ENCODE measurements at regions of chr18 and their contacts with region 1.

Region 1: GRCh38 chr18:32343634-32344033 is 127.0 kb downstream of the GAREM1 start:
- DNase-seq: no peak

Region 2: DNA sequence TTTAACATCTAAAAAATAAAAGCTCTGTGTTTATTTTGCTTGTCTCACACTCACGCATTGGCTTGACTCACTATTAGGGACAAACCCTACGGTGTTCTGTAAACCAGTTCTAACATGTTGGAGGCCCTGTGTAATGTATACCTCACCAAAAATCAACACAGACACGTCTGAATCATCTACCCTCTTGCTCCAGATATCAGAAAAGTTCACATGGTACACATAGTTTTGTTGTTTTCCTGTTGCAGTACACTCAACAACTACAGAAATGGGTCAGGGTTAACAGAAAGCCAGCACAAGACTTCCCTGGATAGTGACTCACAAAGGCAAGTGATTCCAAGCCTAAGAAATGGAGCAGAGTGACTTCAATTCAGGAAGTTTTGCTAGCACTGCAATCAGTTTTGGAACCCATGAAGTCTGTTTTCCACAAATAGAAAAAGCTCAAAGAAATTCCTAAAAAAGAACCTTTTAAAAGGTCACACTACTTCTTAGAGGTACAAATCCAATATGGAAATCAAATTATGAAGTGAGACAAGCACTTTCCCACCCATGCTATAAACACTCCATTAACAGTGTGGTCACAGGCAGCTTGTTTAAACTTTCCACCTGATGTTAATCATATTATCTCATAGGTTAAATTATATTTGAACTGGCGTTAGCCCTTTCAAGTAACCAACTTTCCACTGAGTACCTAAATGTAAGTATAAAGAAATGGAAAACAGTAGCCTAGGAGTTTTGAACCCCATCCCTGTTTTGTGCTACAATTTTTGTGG is 39.6 kb after region 1 on chr18:
- intact Hi-C with region 1: loop called (anchors 5 kb)
- DNase-seq: no peak

Region 3: GRCh38 chr18:32420084-32420750 is 76.6 kb after region 1 on chr18:
- intact Hi-C with region 1: no loop called
- DNase-seq: no peak

Measured in cardiac septum (tissue), 1 donor.